Astrocyte of the cerebellum (primary cell): ENCODE measurements at regions of chr1 and their contacts with region 1.

Region 1: DNA sequence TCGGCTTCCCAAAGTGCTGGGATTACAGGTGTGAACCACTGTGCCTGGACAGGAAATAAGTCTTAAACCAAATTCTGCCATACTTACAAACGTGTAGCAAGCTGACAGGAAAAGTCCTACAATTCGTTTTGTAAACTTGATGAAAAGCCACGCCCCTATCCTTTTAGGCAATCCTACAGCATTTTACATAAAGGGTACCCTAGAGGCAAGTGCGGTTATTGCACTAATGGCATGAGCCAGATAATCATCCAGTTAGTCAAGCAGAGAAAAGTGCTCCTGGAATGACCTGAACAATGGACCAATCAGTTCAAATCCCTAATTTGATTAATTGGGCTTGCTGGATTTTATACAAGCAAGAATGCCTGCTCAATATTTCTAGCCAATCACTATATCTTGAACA is 338.2 kb downstream of the KIF26B start:
- DNase-seq: no peak
- H3K4me3 ChIP-seq: no peak overlapping the region
- CTCF ChIP-seq: no peak

Region 2: DNA sequence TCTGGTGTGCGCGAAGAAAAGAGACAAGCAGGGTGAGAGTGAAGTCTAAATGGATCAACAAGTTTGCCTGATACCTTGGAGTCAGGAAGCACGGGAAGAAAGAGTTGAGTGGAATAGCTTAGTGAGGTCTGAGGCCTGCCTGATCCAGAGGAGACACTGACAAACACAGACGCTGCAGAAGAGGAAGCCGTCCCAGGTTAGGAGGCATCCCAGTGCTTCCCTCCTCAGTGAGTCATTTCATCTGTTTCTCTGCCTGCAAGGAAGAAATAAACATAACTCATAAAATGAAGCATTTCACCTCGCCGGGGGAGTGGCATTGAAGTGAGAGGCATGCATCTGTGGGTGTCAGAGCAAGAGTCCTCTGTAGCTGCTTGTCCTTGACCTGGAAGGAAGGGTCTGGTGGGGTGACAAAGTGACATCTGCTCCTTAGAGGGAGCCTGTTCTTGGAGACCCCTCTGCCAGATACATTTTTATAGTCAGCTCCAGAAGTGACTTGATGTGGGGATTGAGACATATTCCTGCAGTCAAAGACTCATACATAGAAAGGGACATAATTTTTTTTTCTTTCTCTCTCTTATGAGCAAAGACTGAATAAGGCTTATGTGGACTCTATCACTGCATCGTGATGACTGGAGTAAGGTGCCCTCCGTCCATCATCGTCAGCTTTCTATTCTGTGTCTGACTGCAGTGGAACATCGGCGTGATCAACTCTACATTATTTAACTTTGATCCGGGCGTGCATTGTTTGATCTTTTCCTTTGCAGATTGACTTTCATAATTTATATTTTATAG is 81.6 kb before region 1 on chr1:
- in situ Hi-C with region 1: loop called (anchors 5 kb)
- DNase-seq: no peak
- H3K4me3 ChIP-seq: no peak overlapping the region
- CTCF ChIP-seq: no peak

Region 3: GRCh38 chr1:245441689-245442088 is 51.3 kb before region 1 on chr1:
- in situ Hi-C with region 1: loop called (anchors 5 kb)
- DNase-seq: no peak
- H3K4me3 ChIP-seq: no peak overlapping the region
- CTCF ChIP-seq: no peak

Region 4: GRCh38 chr1:245537992-245538391 is 45.0 kb after region 1 on chr1:
- in situ Hi-C with region 1: no loop called
- DNase-seq: no peak
- H3K4me3 ChIP-seq: no peak overlapping the region
- CTCF ChIP-seq: no peak

Region 5: GRCh38 chr1:245585252-245585959 is 92.4 kb after region 1 on chr1:
- in situ Hi-C with region 1: loop called (anchors 5 kb)
- DNase-seq: peak; percentile 57
- H3K4me3 ChIP-seq: no peak overlapping the region
- CTCF ChIP-seq: no peak